ENCODE measurements at regions of chr7 and their contacts with region 1.

Region 1: DNA sequence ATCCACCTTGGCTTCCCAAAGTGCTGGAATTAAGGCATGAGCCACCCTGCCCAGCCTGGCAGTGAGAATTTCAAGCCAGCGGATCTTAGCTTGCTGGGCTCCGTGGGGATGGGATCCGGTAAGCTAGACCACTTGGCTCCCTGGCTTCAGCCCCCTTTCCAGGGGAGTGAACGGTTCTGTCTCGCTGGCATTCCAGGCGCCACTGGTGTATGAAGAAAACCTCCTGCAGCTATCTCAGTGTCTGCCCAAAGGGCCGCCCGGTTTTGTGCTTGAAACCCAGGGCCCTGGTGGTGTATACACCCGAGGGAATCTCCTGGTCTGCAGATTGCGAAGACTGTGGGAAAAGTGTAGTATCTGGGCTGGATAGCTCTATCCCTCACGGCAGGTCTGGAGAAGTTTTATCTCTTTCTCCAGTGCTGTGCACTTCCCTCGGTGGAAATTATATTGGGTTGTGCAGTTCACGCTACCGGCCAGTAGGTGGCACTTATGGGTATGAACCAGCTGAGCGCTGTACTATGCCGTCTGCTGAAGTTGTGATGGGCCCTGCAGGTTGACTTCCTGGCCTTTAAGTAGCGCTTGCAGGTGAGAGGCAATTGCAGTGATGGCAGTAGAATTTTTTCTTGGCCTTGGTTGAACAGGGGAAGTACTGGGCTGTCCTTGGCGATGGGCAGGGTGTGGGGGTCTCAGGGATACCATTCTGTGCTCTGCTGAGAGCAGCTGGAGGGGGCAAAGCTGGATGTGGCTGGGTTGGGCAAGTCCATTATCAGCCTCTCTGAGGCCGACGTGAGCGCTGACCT is 138.0 kb upstream of the MTPN start:
- DNase-seq: peak; percentile 74
- H3K4me3 ChIP-seq: no peak overlapping the region
- H3K27ac ChIP-seq: no peak overlapping the region
- H3K4me1 ChIP-seq: no peaks in the 10 kb centered on the region
- CTCF ChIP-seq: peak; percentile 82

Region 2: GRCh38 chr7:136228171-136228570 is 113.0 kb after region 1 on chr7:
- CTCF ChIA-PET with region 1: no interaction called
- POLR2A ChIA-PET with region 1: no interaction called
- intact Hi-C with region 1: no loop called
- DNase-seq: no peak
- H3K4me3 ChIP-seq: no peak overlapping the region
- H3K27ac ChIP-seq: no peak overlapping the region
- H3K4me1 ChIP-seq: no peaks in the 10 kb centered on the region
- CTCF ChIP-seq: no peak

Region 3: DNA sequence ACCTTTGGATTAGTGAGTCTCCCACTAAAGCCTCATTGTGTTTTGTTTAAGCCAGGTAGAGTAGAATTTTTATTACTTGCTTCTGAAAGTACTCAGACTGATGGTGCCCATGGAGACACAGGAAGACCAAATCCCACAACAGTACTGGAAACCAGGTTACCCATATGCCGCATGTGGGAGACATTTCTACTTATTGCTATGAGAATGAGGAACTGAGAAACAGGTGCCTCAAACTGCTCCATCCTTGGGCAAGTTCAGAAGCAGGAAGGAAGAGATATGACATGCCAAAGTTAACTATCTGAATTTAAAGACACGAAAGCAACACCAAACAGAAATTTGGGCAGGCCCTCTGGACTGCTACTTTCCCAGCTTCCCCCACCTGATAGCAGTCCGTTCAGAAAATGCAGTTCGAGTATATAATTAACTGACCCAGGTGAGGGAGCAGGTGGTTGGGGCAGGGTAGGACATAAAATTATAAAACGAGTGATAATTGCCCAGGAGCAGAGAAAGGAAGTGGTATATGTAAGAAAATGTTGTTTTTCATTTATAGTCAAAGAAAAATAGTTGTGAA is 244.3 kb after region 1 on chr7:
- CTCF ChIA-PET with region 1: no interaction called
- POLR2A ChIA-PET with region 1: no interaction called
- intact Hi-C with region 1: loop called (anchors 5 kb)
- DNase-seq: peak; percentile 95
- H3K4me3 ChIP-seq: peak overlapping the region; percentile 49
- H3K27ac ChIP-seq: peak overlapping the region; percentile 100
- H3K4me1 ChIP-seq: peaks cover 79% of the 10 kb centered on the region
- CTCF ChIP-seq: 0 out of 2 replicates have a peak, but pooled peaks have one; percentile 25

Region 4: DNA sequence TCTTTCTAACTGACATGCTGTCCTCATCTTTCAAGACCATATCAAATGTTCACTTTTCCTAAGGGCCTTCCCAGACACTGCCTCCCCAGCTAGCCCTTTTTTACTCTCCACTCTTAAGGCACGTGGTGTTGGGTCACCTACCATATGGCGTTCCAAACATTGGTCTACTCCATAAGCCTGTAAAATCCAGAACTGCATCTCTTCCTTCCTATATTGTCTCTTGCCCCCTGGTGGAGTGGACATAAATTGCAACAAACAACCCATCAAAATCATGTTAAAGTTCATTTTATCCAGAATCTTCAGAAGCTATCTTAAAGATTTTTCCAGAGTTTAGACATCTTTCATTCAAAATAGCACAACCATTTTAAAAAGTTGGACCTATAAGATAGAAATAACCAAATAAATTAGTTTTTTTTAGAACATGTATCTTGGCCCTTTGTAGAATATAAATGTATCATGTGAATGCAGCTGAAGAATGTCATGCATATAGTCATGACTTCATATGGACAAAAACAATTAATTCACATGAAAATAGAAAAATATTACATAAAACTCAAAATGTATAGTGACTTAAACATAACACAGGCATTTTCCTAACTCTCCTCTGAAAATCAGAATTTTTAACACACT is 572.6 kb after region 1 on chr7:
- CTCF ChIA-PET with region 1: no interaction called
- POLR2A ChIA-PET with region 1: no interaction called
- intact Hi-C with region 1: loop called (anchors 10 kb)
- DNase-seq: peak; percentile 58
- H3K4me3 ChIP-seq: no peak overlapping the region
- H3K27ac ChIP-seq: no peak overlapping the region
- H3K4me1 ChIP-seq: peaks cover 7% of the 10 kb centered on the region
- CTCF ChIP-seq: peak; percentile 88

Region 5: DNA sequence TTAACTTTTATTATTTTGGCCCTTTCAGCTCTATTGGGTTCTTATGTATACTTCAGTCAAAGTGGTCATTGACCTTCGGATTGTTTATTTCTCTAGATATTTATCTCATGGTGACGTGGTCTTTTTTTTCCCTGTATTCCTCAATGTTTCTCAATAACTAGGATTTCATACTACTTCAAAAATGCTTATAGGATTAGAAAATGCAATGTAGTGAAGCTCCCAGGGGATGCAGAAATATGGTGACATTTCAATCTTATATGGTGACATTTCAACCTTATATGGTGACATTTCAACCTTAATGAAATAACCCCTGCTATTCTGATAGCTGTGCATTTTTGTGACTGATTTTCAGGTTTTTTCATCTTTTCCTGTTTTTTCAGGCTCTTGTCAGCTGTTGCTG is 804.7 kb after region 1 on chr7:
- CTCF ChIA-PET with region 1: no interaction called
- POLR2A ChIA-PET with region 1: no interaction called
- intact Hi-C with region 1: no loop called
- DNase-seq: no peak
- H3K4me3 ChIP-seq: no peak overlapping the region
- H3K27ac ChIP-seq: no peak overlapping the region
- H3K4me1 ChIP-seq: no peaks in the 10 kb centered on the region
- CTCF ChIP-seq: no peak